Thyroid gland (tissue), 4 donors: ENCODE measurements at regions of chr18 and their contacts with region 1.

Region 1: GRCh38 chr18:45384137-45384961 is 230.9 kb upstream of the SLC14A2 start:
- DNase-seq: peak; percentile 56 to 59
- H3K4me3 ChIP-seq: no peak overlapping the region
- H3K27ac ChIP-seq: no peak overlapping the region
- H3K4me1 ChIP-seq: peaks cover 0 to 4% of the 10 kb centered on the region in 2 donors
- H3K27me3 ChIP-seq: no peaks in the 10 kb centered on the region
- CTCF ChIP-seq: peak; percentile 26 to 72 (median 60)
- POLR2A ChIP-seq: no peak

Region 2: DNA sequence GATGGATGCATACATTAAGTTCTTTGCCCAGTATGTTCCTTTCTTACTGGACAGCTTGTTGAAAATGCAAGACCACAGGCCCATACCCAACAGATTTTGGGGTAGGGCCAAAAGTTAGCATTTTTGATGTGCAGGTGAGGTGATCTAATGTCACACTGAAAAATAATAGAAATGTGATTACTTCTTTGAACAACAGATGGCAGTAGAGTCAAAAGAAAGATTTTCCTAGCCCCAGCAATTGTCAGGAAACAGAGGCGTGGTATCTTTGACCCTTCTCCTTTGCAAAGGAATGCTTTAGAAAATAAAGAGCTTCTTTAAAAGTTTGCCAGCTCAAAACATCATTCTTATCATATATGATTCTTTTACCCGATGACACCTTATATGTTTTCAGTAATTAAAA is 1763.4 kb before region 1 on chr18:
- intact Hi-C with region 1: loop called (anchors 5 kb)
- DNase-seq: no peak
- H3K4me3 ChIP-seq: no peak overlapping the region
- H3K27ac ChIP-seq: no peak overlapping the region
- H3K4me1 ChIP-seq: no peaks in the 10 kb centered on the region
- H3K27me3 ChIP-seq: no peaks in the 10 kb centered on the region
- CTCF ChIP-seq: peak in 5 of 6 experiments; percentile 3 to 68 (median 52)
- POLR2A ChIP-seq: no peak